ENCODE measurements at regions of chr6 and their contacts with region 1.

Region 1: GRCh38 chr6:145633981-145634627 is 101.2 kb downstream of the EPM2A start:
- DNase-seq: peak; percentile 70
- CTCF ChIP-seq: peak; percentile 82

Region 2: DNA sequence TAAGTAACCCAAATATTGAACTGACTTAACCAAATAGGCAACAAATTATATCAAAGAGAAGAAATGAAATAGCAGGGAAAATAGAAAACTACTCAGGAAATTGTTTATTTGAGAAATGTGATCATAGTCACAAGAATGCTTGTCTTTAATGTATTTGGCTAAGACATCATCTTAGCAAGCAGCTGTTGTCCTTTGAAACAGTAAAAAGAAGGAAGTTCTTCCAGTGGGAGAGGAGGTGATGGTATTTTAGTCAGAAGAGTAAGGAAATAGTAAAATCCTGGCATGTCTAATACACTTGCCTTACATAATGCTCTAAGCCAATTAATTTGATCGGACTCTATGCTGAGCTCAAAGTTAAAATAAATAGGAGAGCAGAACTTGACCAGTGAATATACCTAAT is 25.3 kb before region 1 on chr6:
- CTCF ChIA-PET with region 1: interaction called, 11 read pairs
- POLR2A ChIA-PET with region 1: no interaction called
- DNase-seq: no peak
- CTCF ChIP-seq: no peak

Region 3: GRCh38 chr6:145621776-145622175 is 12.3 kb before region 1 on chr6:
- CTCF ChIA-PET with region 1: interaction called, 27 read pairs
- POLR2A ChIA-PET with region 1: no interaction called
- DNase-seq: no peak
- CTCF ChIP-seq: no peak

Region 4: GRCh38 chr6:145660676-145661075 is 26.6 kb after region 1 on chr6:
- CTCF ChIA-PET with region 1: interaction called, 14 read pairs
- POLR2A ChIA-PET with region 1: no interaction called
- DNase-seq: no peak
- CTCF ChIP-seq: no peak